ENCODE measurements at regions of chr15 and their contacts with region 1.

Region 1: DNA sequence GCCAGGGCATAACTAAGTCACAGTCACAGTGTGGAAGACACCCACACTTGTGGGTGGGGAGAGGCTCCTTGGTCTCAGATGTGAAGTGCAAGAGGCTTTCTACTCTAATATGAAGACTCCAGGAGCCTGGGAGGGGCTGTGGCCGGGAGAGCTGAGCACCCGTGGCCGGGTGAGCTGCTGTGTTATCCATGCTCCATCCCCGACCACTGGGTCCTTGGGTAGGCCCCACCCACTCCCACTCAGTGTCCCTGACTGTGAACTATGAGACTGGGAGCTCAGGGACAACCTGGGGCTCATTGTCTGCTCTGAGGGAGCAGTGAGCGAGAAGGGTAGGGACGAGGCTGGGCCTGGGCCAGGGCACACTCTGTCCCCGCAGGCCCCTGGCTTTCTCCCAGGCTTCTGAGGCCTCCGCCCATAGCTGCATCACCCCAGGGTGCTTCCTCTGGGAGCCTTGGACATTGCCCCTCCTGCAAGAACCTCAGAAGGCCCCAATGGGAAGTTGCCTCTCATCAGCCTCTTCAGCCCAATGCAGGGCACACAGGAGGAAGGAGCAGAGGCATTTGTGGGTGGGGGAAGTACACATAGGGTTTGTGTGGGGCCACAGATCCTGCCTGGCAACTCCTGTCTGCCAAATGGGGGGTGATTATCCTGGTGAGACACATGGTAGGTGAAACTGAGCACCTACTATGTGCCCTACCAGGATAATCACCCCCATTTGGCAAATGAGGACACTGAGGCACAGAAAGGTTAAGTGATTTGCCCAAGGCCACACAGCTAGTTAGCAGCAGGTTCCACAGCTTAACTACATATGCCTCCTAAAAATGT is 2.4 kb downstream of the ANPEP start:
- DNase-seq: peak; percentile 75 to 83 (median 79)
- H3K4me3 ChIP-seq: peak overlapping the region in 2 of 3 experiments; percentile 3 to 98
- H3K4me3 Mint-ChIP-seq: peak overlapping the region; percentile 91 to 93
- H3K27ac ChIP-seq: peak overlapping the region; percentile 41 to 98
- H3K27ac Mint-ChIP-seq: peak overlapping the region; percentile 75 to 96 (median 86)
- H3K4me1 ChIP-seq: peaks cover 31 to 38% of the 10 kb centered on the region in 2 donors
- H3K4me1 Mint-ChIP-seq: peaks cover 44% of the 10 kb centered on the region
- H3K27me3 ChIP-seq: no peaks in the 10 kb centered on the region
- H3K27me3 Mint-ChIP-seq: peaks cover 2 to 24% (median 13%) of the 10 kb centered on the region in 3 donors
- CTCF ChIP-seq: no peak

Region 2: GRCh38 chr15:89551502-89551901 is 260.7 kb before region 1 on chr15:
- intact Hi-C with region 1: no loop called
- DNase-seq: peak; percentile 21 to 49 (median 42)
- H3K4me3 ChIP-seq: no peak overlapping the region
- H3K4me3 Mint-ChIP-seq: no peak overlapping the region
- H3K27ac ChIP-seq: no peak overlapping the region
- H3K27ac Mint-ChIP-seq: peak overlapping the region in 5 of 7 donors; percentile 29 to 71 (median 57)
- H3K4me1 ChIP-seq: peaks cover 4 to 11% of the 10 kb centered on the region in 2 donors
- H3K4me1 Mint-ChIP-seq: peaks cover 10% of the 10 kb centered on the region
- H3K27me3 ChIP-seq: no peaks in the 10 kb centered on the region
- H3K27me3 Mint-ChIP-seq: peaks cover 2 to 11% (median 3%) of the 10 kb centered on the region in 3 donors
- CTCF ChIP-seq: no peak

Region 3: DNA sequence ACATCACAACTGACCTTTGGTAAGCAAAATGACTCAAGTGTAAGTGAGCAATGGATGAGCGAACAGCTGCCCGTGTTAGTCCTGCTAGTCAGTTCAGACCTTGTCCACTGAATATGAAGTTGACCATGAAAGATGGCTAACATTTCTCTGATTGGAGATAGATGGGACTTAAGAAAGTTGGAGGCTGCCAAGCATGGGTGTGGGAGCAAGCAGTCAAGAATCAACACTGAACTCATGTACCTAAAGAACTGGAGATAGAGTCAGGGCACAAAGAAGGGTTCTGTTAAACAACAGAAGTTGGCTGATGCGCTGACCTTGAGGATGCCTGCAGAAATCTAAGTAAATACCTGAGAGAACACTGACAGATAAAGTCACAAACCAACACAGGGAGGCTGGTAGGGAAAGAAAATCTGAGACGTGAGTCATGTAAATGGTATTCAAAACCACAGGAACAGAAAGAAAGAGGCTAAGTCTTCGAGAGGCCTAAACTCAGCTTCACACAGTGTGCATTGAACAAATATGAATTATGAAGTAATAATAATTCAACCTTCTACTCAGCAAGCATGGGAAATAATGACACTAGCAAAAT is 33.2 kb after region 1 on chr15:
- intact Hi-C with region 1: loop called (anchors 5 kb)
- DNase-seq: no peak
- H3K4me3 ChIP-seq: no peak overlapping the region
- H3K4me3 Mint-ChIP-seq: no peak overlapping the region
- H3K27ac ChIP-seq: no peak overlapping the region
- H3K27ac Mint-ChIP-seq: peak overlapping the region in 3 of 7 donors; percentile 9 to 82 (median 48)
- H3K4me1 ChIP-seq: peaks cover 38 to 45% of the 10 kb centered on the region in 2 donors
- H3K4me1 Mint-ChIP-seq: peaks cover 58% of the 10 kb centered on the region
- H3K27me3 ChIP-seq: no peaks in the 10 kb centered on the region
- H3K27me3 Mint-ChIP-seq: no peaks in the 10 kb centered on the region
- CTCF ChIP-seq: no peak

Region 4: DNA sequence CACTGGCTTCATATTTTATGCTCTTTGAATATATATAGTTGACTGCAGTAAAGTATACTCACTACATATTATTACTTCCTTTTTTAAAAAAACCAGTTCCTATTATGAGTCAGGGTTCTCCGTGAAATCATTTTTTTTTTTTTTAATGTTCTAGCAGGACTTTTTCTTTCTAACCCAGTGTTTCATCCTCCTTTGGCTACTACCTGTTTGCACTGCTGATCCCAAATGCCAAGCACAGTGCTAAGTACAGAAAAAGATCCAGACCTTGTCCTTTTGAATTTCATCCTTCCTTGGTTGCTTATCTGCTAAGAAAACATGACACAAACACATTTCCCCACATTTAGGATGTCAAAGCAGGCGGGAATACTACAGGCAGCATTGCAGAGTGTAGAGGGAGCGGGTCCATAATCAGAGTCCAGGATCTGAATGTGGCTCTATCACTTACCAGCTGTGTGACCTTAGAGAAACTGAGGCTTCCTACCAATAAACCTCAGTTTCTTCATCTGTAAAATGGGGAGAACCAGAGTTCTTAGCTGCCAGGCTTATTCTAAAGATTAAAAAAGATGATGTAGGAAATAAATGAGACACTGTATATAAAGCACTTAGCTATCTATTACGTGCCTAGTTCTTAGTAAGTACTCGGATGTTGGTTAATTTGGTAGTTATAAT is 39.6 kb after region 1 on chr15:
- intact Hi-C with region 1: loop called (anchors 5 kb)
- DNase-seq: peak; percentile 51 to 78 (median 64)
- H3K4me3 ChIP-seq: peak overlapping the region in 1 of 3 experiments; percentile 30
- H3K4me3 Mint-ChIP-seq: peak overlapping the region; percentile 1 to 27
- H3K27ac ChIP-seq: peak overlapping the region; percentile 62 to 96
- H3K27ac Mint-ChIP-seq: peak overlapping the region; percentile 88 to 99 (median 97)
- H3K4me1 ChIP-seq: peaks cover 60 to 65% of the 10 kb centered on the region in 2 donors
- H3K4me1 Mint-ChIP-seq: peaks cover 57% of the 10 kb centered on the region
- H3K27me3 ChIP-seq: no peaks in the 10 kb centered on the region
- H3K27me3 Mint-ChIP-seq: no peaks in the 10 kb centered on the region
- CTCF ChIP-seq: no peak

Region 5: DNA sequence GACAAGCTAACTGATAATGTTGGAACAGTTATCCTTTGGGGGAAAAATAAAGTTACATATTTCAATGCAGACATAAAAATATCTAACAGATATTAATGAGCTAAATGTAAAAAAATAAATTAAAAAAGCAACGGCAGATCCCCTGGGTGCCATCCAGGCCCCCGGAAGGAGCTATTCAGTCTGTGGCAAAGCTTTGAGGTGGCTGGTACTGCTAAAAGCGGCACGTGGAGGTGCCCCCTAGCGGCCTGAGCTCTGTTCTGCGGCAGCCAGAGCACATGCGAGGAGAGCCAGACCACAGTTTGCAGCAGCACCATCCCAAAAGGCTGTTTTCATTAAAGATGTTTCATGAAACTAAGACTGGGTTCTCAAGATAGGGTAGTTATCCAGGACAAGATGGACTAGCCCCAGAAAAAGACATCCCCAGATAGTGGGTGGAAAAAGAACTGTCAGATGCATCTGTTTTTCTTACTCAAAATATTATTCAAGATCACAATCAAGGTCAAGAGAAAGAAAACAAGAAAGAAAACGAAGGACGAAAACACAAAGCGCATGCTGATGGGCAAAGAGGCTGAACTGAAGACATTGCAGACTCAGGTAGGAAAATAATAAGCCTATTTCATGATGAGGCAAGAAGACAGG is 62.8 kb after region 1 on chr15:
- intact Hi-C with region 1: loop called (anchors 5 kb)
- DNase-seq: peak; percentile 77 to 86 (median 79)
- H3K4me3 ChIP-seq: no peak overlapping the region
- H3K4me3 Mint-ChIP-seq: no peak overlapping the region
- H3K27ac ChIP-seq: peak overlapping the region; percentile 88 to 91
- H3K27ac Mint-ChIP-seq: peak overlapping the region; percentile 90 to 98 (median 97)
- H3K4me1 ChIP-seq: peaks cover 50 to 55% of the 10 kb centered on the region in 2 donors
- H3K4me1 Mint-ChIP-seq: peaks cover 48% of the 10 kb centered on the region
- H3K27me3 ChIP-seq: no peaks in the 10 kb centered on the region
- H3K27me3 Mint-ChIP-seq: peaks cover 0 to 3% (median 0%) of the 10 kb centered on the region in 3 donors
- CTCF ChIP-seq: peak; percentile 95